AG04449 (cell line): ENCODE measurements at regions of chr17 and their contacts with region 1.

Region 1: DNA sequence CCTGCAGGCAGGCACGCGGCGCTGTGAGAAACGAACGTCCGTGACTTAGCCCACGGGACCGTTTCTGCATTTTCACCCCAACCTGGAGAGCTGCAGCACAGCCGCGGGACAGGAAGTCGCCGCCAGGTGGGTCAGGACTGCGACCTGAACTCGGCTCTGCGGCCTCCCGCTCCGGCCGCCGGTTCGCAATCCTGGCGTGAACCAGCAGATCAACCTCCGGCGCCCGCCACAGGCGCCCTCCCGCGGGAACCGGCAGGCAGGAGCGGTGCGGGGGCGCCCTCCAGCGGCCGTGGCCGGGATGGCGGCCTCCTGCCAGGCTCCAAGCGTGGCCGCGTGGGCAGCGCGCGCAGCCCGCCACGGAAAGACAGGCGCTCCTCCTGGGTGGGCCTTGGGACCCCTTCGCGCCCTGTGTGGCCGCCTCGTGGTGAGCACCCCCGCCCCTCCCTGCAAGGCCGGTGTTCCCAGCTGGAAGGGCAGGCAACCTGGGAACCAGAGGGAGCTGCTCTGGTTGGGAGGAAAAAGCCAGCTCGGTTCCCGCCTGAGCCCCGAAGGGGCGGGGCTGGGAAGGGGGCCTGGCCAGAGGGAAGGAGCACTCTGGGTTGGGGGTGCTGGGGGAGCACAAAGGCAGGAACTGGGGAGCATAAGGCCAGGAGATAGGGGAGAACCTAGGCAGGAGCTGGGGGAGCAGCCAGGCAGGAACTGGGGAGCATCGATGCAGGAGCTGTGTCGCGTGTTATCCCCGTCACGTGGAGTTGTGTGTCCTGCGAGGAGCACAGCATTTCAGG is 28.2 kb downstream of the ACTG1 start:
- DNase-seq: no peak
- H3K4me3 ChIP-seq: peak overlapping the region; percentile 57
- CTCF ChIP-seq: peak; percentile 83

Region 2: GRCh38 chr17:81142301-81143199 is 341.8 kb before region 1 on chr17:
- CTCF ChIA-PET with region 1: interaction called, 29 read pairs
- POLR2A ChIA-PET with region 1: no interaction called
- DNase-seq: peak; percentile 5
- H3K4me3 ChIP-seq: no peak overlapping the region
- CTCF ChIP-seq: peak; percentile 83

Region 3: DNA sequence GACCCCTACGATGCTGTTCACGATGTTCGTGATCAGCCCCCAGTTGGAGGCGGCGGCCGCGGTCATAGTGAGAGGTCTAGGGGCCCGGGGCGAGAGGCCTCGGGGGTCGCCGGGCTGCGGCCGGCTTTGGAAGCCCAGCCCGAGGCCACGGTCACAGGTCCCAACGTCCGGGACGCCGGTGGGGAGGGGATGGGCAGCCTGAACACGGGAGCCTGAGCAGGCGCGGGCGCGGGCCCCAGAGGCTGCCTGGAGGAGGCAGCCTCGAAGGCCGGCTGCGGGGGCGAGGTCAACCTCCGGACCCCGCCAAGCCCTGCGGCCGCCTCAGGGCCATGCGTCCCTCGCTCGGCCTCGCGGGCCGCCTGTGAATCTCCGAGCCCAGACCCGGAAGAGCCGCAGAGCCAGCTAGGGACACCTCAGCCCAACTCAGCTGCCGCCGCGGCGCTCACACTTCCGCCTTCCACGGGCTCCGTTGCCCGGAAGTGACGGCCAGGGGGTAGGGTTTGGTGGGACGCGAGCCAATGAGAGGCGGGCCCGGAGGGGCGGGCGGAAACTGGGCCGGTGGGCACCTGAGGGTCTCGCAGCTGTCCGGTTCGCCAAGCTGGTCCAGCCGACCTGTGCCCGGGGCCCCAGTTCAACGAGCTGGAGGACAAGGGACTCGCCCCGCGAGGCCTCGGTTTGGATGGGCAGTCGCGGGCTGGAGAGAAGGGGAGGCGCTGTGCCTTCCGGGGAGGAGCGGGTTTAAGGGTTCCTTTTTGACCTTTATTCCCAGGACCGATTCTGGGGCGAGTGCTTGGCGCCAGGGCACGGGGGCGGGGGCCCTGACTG is 189.3 kb before region 1 on chr17 and contains the start of gene SLC38A10:
- CTCF ChIA-PET with region 1: interaction called, 82 read pairs
- POLR2A ChIA-PET with region 1: no interaction called
- DNase-seq: no peak
- H3K4me3 ChIP-seq: peak within 1 kb of the TSS; percentile 85
- CTCF ChIP-seq: no peak

Region 4: DNA sequence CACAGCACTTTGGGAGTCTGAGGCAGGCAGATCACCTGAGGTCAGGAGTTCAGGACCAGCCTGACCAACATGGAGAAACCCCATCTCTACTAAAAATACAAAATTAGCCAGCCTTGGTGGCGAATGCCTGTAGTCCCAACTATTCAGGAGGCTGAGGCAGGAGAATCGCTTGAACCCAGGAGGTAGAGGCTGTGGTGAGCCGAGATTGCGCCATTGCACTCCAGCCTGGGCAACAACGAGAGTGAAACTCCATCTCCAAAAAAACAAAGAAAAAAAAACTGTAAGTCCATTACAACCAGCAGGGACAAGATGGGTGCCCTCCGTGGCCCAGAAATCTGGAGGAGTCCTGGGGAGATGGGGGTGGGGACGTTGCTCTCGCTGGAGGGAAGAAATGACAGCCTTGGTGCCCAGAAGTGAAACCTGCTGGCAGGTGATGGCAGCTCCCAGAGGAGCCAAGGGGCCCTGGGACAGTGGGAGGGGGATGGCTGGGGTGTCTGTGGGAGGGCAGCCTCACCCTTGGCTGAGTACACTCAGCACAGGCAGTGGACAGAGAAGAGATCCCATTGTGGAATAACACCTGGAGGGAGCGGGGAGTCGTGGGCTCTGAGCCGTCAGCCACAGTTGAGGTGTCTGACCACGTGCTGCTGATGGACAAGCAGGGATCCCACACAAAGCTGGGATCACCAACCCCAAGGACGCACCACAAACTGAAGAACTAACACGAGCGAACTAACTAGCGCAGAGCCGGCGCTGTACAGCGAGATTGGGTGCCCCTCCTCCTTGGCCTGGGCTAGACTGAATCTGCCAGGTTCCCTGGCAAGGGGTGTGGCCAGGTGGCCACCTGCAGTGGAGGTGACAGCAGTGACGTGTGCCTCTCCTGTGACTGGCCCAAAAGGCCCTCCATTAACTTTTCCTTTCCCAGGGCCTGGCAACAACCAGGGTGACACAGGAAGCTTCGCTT is 136.0 kb before region 1 on chr17:
- CTCF ChIA-PET with region 1: no interaction called
- POLR2A ChIA-PET with region 1: no interaction called
- DNase-seq: no peak
- H3K4me3 ChIP-seq: no peak overlapping the region
- CTCF ChIP-seq: no peak

Region 5: GRCh38 chr17:81371910-81372760 is 112.3 kb before region 1 on chr17:
- CTCF ChIA-PET with region 1: interaction called, 26 read pairs
- POLR2A ChIA-PET with region 1: no interaction called
- DNase-seq: no peak
- H3K4me3 ChIP-seq: no peak overlapping the region
- CTCF ChIP-seq: peak; percentile 80

Region 6: GRCh38 chr17:81401723-81402529 is 82.5 kb before region 1 on chr17:
- CTCF ChIA-PET with region 1: interaction called, 51 read pairs
- POLR2A ChIA-PET with region 1: interaction called, 12 read pairs
- DNase-seq: no peak
- H3K4me3 ChIP-seq: peak overlapping the region; percentile 36
- CTCF ChIP-seq: peak; percentile 60

Region 7: DNA sequence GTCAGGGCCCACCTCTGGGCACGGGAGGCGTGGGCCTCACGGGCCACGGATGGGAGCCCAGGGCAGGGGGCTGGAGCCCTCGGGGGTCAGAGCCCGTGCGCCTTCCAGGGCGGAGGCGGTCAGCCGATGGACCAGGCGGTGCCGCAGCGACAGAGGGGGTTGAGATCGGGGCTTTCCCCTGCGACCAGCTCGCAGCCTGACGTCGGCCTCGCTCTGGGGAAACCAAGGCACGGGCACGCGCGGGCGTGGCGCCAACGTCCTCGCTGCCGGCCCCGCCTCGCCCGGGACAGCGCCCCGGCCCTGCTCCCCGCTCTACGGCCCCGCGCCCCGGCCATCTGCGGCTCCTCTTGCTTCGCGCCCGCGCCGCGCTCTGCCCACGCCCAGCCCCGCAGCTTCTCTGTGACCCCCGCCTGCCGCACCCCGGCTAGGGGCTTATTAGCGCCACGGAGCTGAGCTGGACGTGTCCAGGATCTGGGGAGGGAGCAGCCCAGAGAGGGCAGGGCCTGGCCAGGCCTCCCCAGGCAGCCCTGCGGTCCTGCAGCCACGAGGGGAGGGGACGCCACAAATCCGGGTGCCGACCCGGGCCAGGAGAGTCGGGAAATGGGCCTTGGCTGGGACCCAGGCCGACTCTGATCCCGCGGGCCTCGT is 14.7 kb after region 1 on chr17:
- CTCF ChIA-PET with region 1: interaction called, 10 read pairs
- POLR2A ChIA-PET with region 1: interaction called, 6 read pairs
- DNase-seq: no peak
- H3K4me3 ChIP-seq: no peak overlapping the region
- CTCF ChIP-seq: no peak

Region 8: GRCh38 chr17:81519284-81519955 is 35.0 kb after region 1 on chr17:
- CTCF ChIA-PET with region 1: no interaction called
- POLR2A ChIA-PET with region 1: no interaction called
- DNase-seq: no peak
- H3K4me3 ChIP-seq: peak overlapping the region; percentile 52
- CTCF ChIP-seq: peak; percentile 28